Body of pancreas (tissue), 4 donors: ENCODE measurements at regions of chr12 and their contacts with region 1.

Region 1: DNA sequence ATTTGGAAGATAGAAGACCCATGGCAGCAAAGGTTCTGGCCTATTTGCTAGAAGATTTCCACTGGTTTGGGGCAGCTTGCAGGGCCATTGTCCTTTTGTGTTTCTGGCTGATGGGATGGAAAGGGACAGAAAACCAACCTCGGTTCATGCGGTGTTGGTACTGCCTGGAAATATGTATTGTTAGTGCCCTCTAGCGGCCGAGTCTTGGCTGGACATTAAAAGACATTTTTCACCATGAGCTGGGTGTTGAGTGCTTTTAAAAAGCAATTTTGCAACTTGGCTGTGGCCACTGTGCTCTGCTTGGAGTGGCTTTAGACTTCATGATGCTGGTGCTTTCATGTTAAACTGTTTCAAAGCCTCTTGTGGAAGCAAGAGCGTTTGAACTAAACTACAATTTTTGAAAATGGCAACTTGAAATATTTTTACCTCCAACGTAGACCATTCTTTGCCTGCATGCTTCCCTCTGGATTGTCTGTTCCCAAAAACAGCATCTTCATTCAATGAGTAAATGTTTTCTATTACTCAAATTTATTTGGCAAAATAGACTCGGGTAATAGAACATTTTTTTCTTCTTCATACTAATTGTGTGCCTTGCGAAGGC is 102.7 kb upstream of the TBX5 start:
- DNase-seq: peak; percentile 66 to 81 (median 78)
- ATAC-seq: peak; percentile 59
- H3K4me3 ChIP-seq: no peak overlapping the region
- H3K27ac ChIP-seq: no peak overlapping the region
- H3K4me1 ChIP-seq: no peaks in the 10 kb centered on the region
- H3K27me3 ChIP-seq: no peaks in the 10 kb centered on the region
- CTCF ChIP-seq: peak; percentile 37 to 80 (median 73)
- POLR2A ChIP-seq: no peak

Region 2: GRCh38 chr12:113980537-113981337 is 527.9 kb before region 1 on chr12:
- intact Hi-C with region 1: loop called (anchors 10 kb)
- DNase-seq: peak; percentile 42 to 57 (median 43)
- ATAC-seq: peak; percentile 76
- H3K4me3 ChIP-seq: no peak overlapping the region
- H3K27ac ChIP-seq: no peak overlapping the region
- H3K4me1 ChIP-seq: no peaks in the 10 kb centered on the region
- H3K27me3 ChIP-seq: peaks cover 0 to 16% of the 10 kb centered on the region in 2 donors
- CTCF ChIP-seq: peak; percentile 80 to 94 (median 92)
- POLR2A ChIP-seq: no peak